Caco-2 (cell line): ENCODE measurements at regions of chr5 and their contacts with region 1.

Region 1: GRCh38 chr5:62305715-62306322 is at the start of gene KIF2A:
- DNase-seq: peak; percentile 91 to 94
- H3K4me3 ChIP-seq: peak within 1 kb of the TSS; percentile 97
- H3K4me3 Mint-ChIP-seq: peak within 1 kb of the TSS; percentile 98
- H3K27ac Mint-ChIP-seq: peak within 1 kb of the TSS; percentile 91
- H3K4me1 ChIP-seq: peaks cover 5% of the 10 kb centered on the region
- H3K4me1 Mint-ChIP-seq: peaks cover 14% of the 10 kb centered on the region
- H3K27me3 ChIP-seq: no peaks in the 10 kb centered on the region
- H3K27me3 Mint-ChIP-seq: no peaks in the 10 kb centered on the region
- CTCF ChIP-seq: no peak
- total RNA-seq, gene KIF2A: 65.6 and 68.0 TPM in 2 replicates

Region 2: GRCh38 chr5:62231576-62231975 is 74.2 kb before region 1 on chr5:
- CTCF ChIA-PET with region 1: no interaction called
- POLR2A ChIA-PET with region 1: no interaction called
- intact Hi-C with region 1: loop called (anchors 5 kb)
- DNase-seq: no peak
- H3K4me3 ChIP-seq: no peak overlapping the region
- H3K4me3 Mint-ChIP-seq: no peak overlapping the region
- H3K27ac Mint-ChIP-seq: no peak overlapping the region
- H3K4me1 ChIP-seq: no peaks in the 10 kb centered on the region
- H3K4me1 Mint-ChIP-seq: no peaks in the 10 kb centered on the region
- H3K27me3 ChIP-seq: no peaks in the 10 kb centered on the region
- H3K27me3 Mint-ChIP-seq: no peaks in the 10 kb centered on the region
- CTCF ChIP-seq: no peak

Region 3: GRCh38 chr5:62268234-62268633 is 37.6 kb before region 1 on chr5:
- CTCF ChIA-PET with region 1: no interaction called
- POLR2A ChIA-PET with region 1: interaction called, 3 read pairs
- intact Hi-C with region 1: loop called (anchors 5 kb)
- DNase-seq: peak; percentile 60 to 65
- H3K4me3 ChIP-seq: no peak overlapping the region
- H3K4me3 Mint-ChIP-seq: peak overlapping the region; percentile 57
- H3K27ac Mint-ChIP-seq: peak overlapping the region; percentile 73
- H3K4me1 ChIP-seq: peaks cover 15% of the 10 kb centered on the region
- H3K4me1 Mint-ChIP-seq: peaks cover 28% of the 10 kb centered on the region
- H3K27me3 ChIP-seq: no peaks in the 10 kb centered on the region
- H3K27me3 Mint-ChIP-seq: no peaks in the 10 kb centered on the region
- CTCF ChIP-seq: no peak

Region 4: DNA sequence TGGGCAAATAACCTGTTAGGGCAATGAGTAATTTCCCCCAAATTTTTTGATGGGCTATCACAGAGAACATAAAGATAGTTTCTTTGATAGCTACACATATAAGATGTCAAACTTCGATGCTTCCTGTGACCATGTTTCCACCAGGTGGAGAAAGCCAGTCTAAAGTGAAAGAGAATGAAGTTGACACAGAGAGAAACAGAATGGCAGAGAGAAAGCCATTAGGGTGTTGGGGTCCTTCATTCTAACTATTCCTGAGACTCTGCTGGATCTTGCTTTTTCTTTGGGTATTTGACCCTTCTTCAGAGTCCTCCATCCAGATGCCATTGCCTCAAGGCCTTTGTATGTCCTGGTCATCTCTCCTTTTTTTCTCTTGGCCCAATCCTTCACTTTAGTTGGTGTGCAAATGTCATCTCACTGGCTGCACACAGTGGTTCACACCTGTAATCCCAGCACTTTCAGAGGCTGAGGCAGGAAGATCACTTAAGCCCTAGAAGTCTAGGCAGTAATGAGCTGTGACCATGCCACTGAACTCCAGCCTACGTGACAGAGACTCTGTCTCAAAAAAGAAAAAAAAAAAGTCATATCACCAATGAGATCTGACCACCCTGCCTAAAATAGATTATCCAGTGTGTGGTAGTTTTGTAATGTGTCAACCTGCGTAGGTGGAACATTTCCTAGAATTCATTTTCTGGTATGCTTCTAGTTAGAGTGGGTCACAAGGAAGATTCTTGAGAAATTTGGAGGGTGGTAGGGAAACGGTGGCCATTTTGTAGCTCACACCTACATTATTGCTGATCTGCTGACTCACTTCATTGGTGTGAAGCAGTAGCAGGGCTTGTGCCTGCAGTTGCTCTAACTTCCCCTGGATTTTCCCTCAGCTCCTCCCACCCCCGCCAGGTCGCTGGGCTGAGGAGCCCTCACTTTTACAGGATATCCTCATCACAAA is 20.6 kb before region 1 on chr5:
- CTCF ChIA-PET with region 1: no interaction called
- POLR2A ChIA-PET with region 1: no interaction called
- intact Hi-C with region 1: no loop called
- DNase-seq: no peak
- H3K4me3 ChIP-seq: no peak overlapping the region
- H3K4me3 Mint-ChIP-seq: no peak overlapping the region
- H3K27ac Mint-ChIP-seq: no peak overlapping the region
- H3K4me1 ChIP-seq: peaks cover 15% of the 10 kb centered on the region
- H3K4me1 Mint-ChIP-seq: peaks cover 9% of the 10 kb centered on the region
- H3K27me3 ChIP-seq: no peaks in the 10 kb centered on the region
- H3K27me3 Mint-ChIP-seq: no peaks in the 10 kb centered on the region
- CTCF ChIP-seq: no peak

Region 5: DNA sequence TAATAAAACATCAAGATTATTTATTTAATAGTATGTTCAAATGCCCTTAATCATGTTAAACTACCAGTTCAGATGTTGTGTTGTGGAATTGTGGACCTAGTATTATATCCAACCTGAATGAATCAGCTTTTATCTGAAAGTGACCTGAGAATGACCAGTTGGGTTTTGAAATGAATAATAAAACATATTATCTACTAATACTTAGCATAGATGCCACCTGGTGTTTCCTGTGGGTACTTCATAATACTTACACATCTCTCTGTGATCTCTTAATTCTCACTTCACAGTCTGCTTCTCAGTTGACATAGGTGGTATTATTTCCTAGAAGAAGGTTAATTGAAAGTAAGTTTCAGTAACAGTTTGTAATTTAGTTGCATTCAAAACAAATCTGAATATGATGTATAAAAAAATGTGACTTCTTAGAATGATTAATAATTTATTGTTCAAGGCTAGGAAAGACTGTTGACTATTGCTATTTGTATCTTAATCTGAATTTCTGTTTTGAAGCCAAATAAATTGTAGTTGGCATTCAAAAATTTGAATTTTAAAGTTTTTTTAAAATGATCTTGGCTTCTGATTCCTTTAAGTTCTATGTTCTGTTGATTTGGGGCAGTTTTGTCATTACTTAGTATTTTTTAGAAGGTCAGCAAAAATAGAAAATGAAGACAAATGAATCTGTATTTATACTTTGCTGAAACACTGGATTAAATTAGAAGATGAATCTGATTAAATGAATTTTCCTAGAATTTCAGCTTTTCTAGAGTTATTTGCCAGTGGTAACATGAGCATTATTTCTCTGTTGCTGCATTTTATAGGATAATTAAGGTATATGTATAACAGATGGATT is 48.4 kb after region 1 on chr5:
- CTCF ChIA-PET with region 1: no interaction called
- POLR2A ChIA-PET with region 1: no interaction called
- intact Hi-C with region 1: loop called (anchors 2 kb)
- DNase-seq: peak in 1 of 2 experiments; percentile 46
- H3K4me3 ChIP-seq: no peak overlapping the region
- H3K4me3 Mint-ChIP-seq: no peak overlapping the region
- H3K27ac Mint-ChIP-seq: no peak overlapping the region
- H3K4me1 ChIP-seq: no peaks in the 10 kb centered on the region
- H3K4me1 Mint-ChIP-seq: no peaks in the 10 kb centered on the region
- H3K27me3 ChIP-seq: no peaks in the 10 kb centered on the region
- H3K27me3 Mint-ChIP-seq: no peaks in the 10 kb centered on the region
- CTCF ChIP-seq: peak; percentile 54 to 57

Region 6: DNA sequence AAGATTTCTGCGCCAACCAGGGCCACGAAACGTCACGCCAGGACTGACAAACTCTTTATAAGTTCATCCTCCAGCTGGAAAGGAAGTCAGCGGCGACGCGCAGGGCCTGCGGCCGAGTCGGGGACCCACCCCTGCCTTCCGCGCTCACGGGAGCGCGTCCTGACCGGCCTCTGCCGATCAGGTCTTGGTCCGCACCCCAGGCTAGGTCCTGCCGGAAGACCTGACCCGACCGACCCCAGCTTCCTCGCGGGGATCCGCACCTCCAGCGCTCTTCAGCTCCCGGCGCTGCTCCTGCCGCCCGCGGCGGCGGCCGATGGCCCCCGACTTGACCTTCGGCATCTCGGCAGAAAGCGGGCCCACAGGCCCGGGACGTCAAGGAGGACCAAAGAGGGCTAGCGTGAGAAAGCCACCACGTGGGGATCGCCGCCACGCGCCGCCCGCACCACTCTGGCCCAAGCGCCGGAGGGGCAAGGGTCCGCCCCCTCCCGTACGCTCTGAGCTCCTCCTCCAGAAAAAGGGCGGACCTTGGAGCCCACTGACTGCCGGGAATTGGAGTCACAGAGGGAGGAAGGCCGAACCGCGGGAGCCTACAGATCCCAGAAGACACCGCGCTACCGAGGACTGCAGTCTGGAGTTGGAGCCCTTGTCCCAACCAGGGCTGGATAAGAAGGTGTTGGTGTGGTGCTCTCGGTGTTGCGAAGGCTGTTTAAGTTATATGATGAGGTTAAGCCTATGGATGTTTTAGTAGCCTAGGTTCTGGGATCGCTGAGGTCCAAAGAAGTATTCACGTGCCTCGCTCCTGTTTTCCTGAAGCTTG is 97.8 kb after region 1 on chr5 and contains the start of gene DIMT1:
- CTCF ChIA-PET with region 1: no interaction called
- POLR2A ChIA-PET with region 1: interaction called, 7 read pairs
- intact Hi-C with region 1: loop called (anchors 5 kb)
- DNase-seq: peak; percentile 97
- H3K4me3 ChIP-seq: peak within 1 kb of the TSS; percentile 81
- H3K4me3 Mint-ChIP-seq: peak within 1 kb of the TSS; percentile 99
- H3K27ac Mint-ChIP-seq: peak within 1 kb of the TSS; percentile 100
- H3K4me1 ChIP-seq: peaks cover 6% of the 10 kb centered on the region; the same call in 1 of the 2 replicates
- H3K4me1 Mint-ChIP-seq: peaks cover 15% of the 10 kb centered on the region
- H3K27me3 ChIP-seq: no peaks in the 10 kb centered on the region
- H3K27me3 Mint-ChIP-seq: no peaks in the 10 kb centered on the region
- CTCF ChIP-seq: no peak
- total RNA-seq, gene DIMT1: 31.8 and 33.4 TPM in 2 replicates

Region 7: DNA sequence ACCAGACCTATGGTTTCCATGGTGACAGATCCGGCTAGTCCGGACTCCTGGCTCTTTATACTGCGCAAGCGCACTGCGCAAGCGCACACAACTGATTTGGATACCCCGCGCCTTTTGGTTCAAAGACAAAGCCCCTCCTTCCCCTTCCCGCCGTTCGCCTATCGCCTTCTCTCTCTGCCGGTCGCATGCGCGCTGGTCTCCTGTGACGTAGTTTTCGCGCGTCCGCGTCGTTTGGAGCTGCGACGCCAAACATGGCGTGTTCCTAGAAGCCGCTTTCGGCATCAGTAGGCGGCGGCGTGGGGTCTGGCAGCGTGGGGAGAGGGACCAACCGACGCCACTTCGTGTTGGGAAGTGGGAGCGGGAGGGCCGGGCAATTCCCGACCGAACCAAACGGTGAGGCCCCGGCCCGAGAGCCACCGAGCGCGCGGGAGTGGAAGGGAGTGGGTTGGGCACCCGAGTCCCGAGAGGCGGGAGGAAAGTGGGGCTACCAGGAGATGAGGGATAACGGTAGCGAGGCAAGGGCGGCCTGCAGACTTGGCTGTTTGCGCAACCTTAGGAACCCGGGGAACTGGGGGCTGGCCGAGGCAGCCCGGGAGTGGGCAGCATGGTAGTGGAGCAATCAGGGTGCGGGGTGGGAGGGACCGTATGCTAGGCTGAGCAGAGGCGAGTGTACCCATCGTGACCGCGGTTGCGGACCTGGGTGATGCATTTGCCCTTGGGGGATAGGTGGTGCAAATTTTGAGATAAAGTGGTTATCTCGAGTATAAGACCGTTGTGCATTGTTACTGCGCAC is 106.9 kb after region 1 on chr5 and contains the start of gene IPO11:
- CTCF ChIA-PET with region 1: no interaction called
- POLR2A ChIA-PET with region 1: interaction called, 10 read pairs
- intact Hi-C with region 1: no loop called
- DNase-seq: peak; percentile 98 to 99
- H3K4me3 ChIP-seq: peak within 1 kb of the TSS; percentile 70
- H3K4me3 Mint-ChIP-seq: peak within 1 kb of the TSS; percentile 81
- H3K27ac Mint-ChIP-seq: peak within 1 kb of the TSS; percentile 90
- H3K4me1 ChIP-seq: no peaks in the 10 kb centered on the region
- H3K4me1 Mint-ChIP-seq: no peaks in the 10 kb centered on the region
- H3K27me3 ChIP-seq: no peaks in the 10 kb centered on the region
- H3K27me3 Mint-ChIP-seq: no peaks in the 10 kb centered on the region
- CTCF ChIP-seq: no peak
- total RNA-seq, gene IPO11: 50.5 and 54.1 TPM in 2 replicates

Region 8: GRCh38 chr5:62547945-62548630 is 242.3 kb after region 1 on chr5:
- CTCF ChIA-PET with region 1: no interaction called
- POLR2A ChIA-PET with region 1: no interaction called
- intact Hi-C with region 1: no loop called
- DNase-seq: no peak
- H3K4me3 ChIP-seq: no peak overlapping the region
- H3K4me3 Mint-ChIP-seq: no peak overlapping the region
- H3K27ac Mint-ChIP-seq: no peak overlapping the region
- H3K4me1 ChIP-seq: no peaks in the 10 kb centered on the region
- H3K4me1 Mint-ChIP-seq: no peaks in the 10 kb centered on the region
- H3K27me3 ChIP-seq: no peaks in the 10 kb centered on the region
- H3K27me3 Mint-ChIP-seq: no peaks in the 10 kb centered on the region
- CTCF ChIP-seq: no peak